ENCODE measurements at regions of chr3 and their contacts with region 1.

Region 1: GRCh38 chr3:129278439-129278970 is at the start of gene HMCES:
- DNase-seq: peak; percentile 82
- ATAC-seq: peak; percentile 82
- H3K4me3 ChIP-seq: peak within 1 kb of the TSS; percentile 99
- H3K27ac ChIP-seq: peak within 1 kb of the TSS; percentile 79
- H3K4me1 ChIP-seq: peaks cover 25% of the 10 kb centered on the region
- H3K27me3 ChIP-seq: no peaks in the 10 kb centered on the region
- CTCF ChIP-seq: no peak
- total RNA-seq, gene HMCES: 28.8 and 34.3 TPM in 2 replicates

Region 2: DNA sequence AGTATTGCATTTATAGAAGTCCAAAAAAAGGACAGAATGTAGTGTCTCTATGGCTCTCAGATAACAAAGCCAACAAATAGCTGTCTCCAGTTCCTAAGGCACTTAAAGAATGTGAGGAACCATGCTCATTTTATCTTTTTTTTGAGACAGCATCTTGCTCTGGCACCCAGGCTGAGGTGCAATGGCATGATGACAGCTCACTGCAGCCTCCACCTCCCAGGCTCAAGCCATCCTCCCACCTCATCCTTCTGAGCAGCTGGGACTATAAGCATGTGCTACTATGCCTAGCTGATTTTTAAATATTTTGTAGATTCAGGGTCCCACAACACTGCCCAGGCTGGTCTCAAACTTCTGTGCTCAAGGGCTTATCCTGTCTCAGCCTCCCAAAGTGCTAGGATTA is 133.7 kb before region 1 on chr3:
- CTCF ChIA-PET with region 1: no interaction called
- POLR2A ChIA-PET with region 1: interaction called, 16 read pairs
- intact Hi-C with region 1: no loop called
- DNase-seq: no peak
- ATAC-seq: no peak
- H3K4me3 ChIP-seq: no peak overlapping the region
- H3K27ac ChIP-seq: no peak overlapping the region
- H3K4me1 ChIP-seq: no peaks in the 10 kb centered on the region
- H3K27me3 ChIP-seq: no peaks in the 10 kb centered on the region
- CTCF ChIP-seq: no peak

Region 3: GRCh38 chr3:129314757-129315222 is 36.3 kb after region 1 on chr3:
- CTCF ChIA-PET with region 1: no interaction called
- POLR2A ChIA-PET with region 1: no interaction called
- intact Hi-C with region 1: loop called (anchors 5 kb)
- DNase-seq: peak; percentile 79
- ATAC-seq: peak; percentile 35
- H3K4me3 ChIP-seq: peak overlapping the region; percentile 86
- H3K27ac ChIP-seq: no peak overlapping the region
- H3K4me1 ChIP-seq: peaks cover 9% of the 10 kb centered on the region
- H3K27me3 ChIP-seq: no peaks in the 10 kb centered on the region
- CTCF ChIP-seq: no peak